A673 (cell line): ENCODE measurements at regions of chr3 and their contacts with region 1.

Region 1: DNA sequence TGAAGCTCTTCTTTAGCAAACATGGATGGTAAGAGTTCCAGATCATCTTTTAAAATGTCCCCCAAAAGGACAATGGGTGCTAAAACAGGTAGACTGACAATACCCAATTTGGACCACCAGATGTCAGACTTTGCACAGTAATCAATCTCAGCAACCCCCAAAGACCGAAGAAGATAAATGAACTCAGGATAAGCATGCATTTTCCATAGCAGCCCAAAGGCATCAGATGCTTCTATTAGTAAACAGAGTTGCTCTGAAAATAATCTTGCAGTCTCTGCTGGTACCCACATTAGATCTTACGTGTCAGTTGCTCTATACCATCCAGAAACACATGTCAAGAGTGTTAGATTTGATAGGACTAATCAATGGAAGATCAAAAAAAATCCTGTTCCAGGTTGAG is 20.6 kb downstream of the MYH15 start:
- DNase-seq: peak; percentile 68
- H3K4me3 ChIP-seq: no peak overlapping the region
- H3K27ac ChIP-seq: no peak overlapping the region
- H3K4me1 ChIP-seq: peaks cover 22% of the 10 kb centered on the region
- H3K27me3 ChIP-seq: no peaks in the 10 kb centered on the region
- CTCF ChIP-seq: peak; percentile 82

Region 2: GRCh38 chr3:108191394-108191793 is 298.4 kb before region 1 on chr3:
- CTCF ChIA-PET with region 1: no interaction called
- POLR2A ChIA-PET with region 1: interaction called, 12 read pairs
- intact Hi-C with region 1: no loop called
- DNase-seq: no peak
- H3K4me3 ChIP-seq: no peak overlapping the region
- H3K27ac ChIP-seq: no peak overlapping the region
- H3K4me1 ChIP-seq: peaks cover 9% of the 10 kb centered on the region
- H3K27me3 ChIP-seq: no peaks in the 10 kb centered on the region
- CTCF ChIP-seq: no peak

Region 3: GRCh38 chr3:108552267-108553159 is 62.7 kb after region 1 on chr3:
- CTCF ChIA-PET with region 1: no interaction called
- POLR2A ChIA-PET with region 1: no interaction called
- intact Hi-C with region 1: loop called (anchors 2 kb)
- DNase-seq: peak; percentile 69
- H3K4me3 ChIP-seq: no peak overlapping the region
- H3K27ac ChIP-seq: no peak overlapping the region
- H3K4me1 ChIP-seq: peaks cover 13% of the 10 kb centered on the region
- H3K27me3 ChIP-seq: no peaks in the 10 kb centered on the region
- CTCF ChIP-seq: peak; percentile 58

Region 4: DNA sequence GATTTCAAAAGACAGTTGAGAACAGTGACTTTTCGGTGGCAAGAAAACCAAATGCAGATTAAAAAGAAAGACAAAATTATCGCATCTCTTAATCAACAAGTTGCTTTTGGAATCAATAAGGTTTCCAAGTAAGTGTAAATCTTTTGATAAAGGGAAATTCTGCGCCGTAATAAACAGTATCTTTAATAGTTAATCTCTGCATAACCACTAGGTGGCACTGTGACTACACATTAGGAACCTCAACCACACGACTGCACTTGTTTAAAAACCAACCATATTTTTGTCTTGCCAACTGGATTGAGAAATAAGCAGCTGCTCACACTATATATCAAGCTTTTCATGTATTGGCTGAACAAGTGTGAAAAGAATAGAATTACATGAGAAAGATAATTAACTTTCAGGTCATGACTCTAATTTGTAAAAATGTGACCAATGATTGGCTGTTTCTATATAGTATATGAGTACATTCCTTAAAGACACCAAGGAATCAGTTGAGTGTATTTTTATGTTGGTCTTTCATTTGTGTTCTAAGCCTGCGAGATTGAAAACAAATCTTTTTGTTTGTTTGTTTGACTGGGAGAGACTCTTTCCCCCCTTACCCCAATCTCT is 172.5 kb after region 1 on chr3:
- CTCF ChIA-PET with region 1: no interaction called
- POLR2A ChIA-PET with region 1: no interaction called
- intact Hi-C with region 1: loop called (anchors 10 kb)
- DNase-seq: peak; percentile 84
- H3K4me3 ChIP-seq: no peak overlapping the region
- H3K27ac ChIP-seq: no peak overlapping the region
- H3K4me1 ChIP-seq: no peaks in the 10 kb centered on the region
- H3K27me3 ChIP-seq: no peaks in the 10 kb centered on the region
- CTCF ChIP-seq: peak; percentile 78

Region 5: GRCh38 chr3:109081746-109082510 is 592.2 kb after region 1 on chr3:
- CTCF ChIA-PET with region 1: no interaction called
- POLR2A ChIA-PET with region 1: no interaction called
- intact Hi-C with region 1: loop called (anchors 10 kb)
- DNase-seq: peak; percentile 65
- H3K4me3 ChIP-seq: no peak overlapping the region
- H3K27ac ChIP-seq: no peak overlapping the region
- H3K4me1 ChIP-seq: no peaks in the 10 kb centered on the region
- H3K27me3 ChIP-seq: no peaks in the 10 kb centered on the region
- CTCF ChIP-seq: peak; percentile 87